ENCODE measurements at regions of chr16 and their contacts with region 1.

Region 1: GRCh38 chr16:21277927-21278706 is at the start of gene CRYM:
- DNase-seq: peak; percentile 81
- CTCF ChIP-seq: peak; percentile 76

Region 2: DNA sequence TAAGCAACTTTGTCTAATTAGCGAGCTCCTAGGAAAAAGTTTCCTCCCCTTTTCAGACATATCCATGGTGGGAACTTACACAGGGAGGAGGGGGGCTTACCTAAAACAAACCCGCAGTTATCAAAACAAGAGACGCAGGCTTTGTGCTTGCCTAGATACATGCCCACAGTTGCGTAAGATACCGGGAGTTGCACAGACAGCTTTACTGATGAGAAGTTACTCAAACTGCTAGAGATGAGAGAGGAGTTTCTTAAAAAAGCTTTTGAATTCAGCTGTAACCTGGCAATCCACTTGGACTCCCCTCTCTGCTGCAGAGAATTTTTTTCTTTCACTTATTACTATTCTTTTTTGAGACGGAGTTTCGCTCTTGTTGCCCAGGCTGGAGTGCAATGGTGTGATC is 60.0 kb before region 1 on chr16:
- CTCF ChIA-PET with region 1: no interaction called
- POLR2A ChIA-PET with region 1: no interaction called
- DNase-seq: no peak
- CTCF ChIP-seq: no peak

Region 3: DNA sequence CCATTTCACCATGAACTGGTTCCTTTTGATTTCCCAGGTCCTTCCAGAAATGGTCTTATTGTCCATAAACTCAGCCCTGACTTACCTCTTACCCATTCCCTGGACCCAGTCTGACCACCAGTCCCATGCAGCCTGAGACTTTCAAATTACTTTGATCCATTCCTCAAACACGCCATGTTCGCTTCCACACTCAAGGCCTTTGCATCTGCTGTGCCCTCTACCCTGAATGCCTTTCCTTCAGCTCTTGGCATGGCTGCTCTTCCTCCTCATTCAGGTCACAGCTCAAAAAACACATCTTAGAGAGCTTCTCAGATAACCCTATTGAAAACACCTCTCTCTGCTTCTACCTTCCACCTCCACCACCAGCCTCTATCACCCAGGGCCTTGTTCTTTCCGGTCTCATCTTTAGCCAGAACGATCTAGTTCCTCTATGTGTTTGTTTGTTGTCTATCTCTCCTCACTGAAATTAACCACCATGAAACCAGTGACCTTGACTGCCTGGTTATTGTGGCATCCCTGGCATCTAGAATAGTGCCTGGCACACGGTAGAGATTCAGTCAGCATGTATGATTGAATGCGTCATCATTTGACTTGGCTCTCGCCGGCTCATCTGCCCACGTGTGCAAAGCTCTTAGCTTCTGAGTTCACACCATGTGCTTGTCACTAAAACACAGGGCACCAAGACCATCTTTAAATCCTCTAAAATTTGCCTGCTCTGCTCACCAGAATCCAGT is 12.8 kb before region 1 on chr16:
- CTCF ChIA-PET with region 1: interaction called, 12 read pairs
- POLR2A ChIA-PET with region 1: no interaction called
- DNase-seq: no peak
- CTCF ChIP-seq: no peak

Measured in GM10248 (cell line).